ENCODE measurements at regions of chr2 and their contacts with region 1.

Region 1: GRCh38 chr2:197184959-197185586 is 125.5 kb downstream of the ANKRD44 start:
- DNase-seq: peak; percentile 84
- ATAC-seq: peak; percentile 83

Region 2: DNA sequence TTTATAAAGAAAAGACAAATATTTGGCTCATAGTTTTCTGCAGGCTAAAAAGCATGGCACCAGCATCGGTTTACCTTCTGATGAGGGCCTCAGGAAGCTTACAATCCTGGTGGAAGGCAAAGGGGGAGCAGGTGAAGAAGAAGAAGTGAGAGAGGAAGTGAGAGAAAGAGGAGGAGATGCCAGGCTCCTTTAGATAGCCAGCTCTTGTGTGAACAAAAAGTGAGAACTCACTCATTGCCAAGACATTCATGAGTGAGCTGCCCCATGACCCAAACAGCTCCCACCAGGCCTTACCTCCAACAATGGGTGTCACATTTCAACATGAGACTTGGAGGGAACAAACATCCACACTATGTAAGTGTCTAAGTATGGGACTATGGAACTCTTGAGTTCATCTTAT is 531.2 kb before region 1 on chr2:
- intact Hi-C with region 1: loop called (anchors 5 kb)
- DNase-seq: no peak
- ATAC-seq: no peak

Region 3: GRCh38 chr2:196926562-196927375 is 258.3 kb before region 1 on chr2 and contains the start of gene PGAP1:
- intact Hi-C with region 1: loop called (anchors 10 kb)
- DNase-seq: peak; percentile 93
- ATAC-seq: peak; percentile 96
- total RNA-seq, gene PGAP1: 24.7 TPM

Region 4: GRCh38 chr2:197216361-197216979 is 31.4 kb after region 1 on chr2:
- intact Hi-C with region 1: no loop called
- DNase-seq: no peak
- ATAC-seq: peak; percentile 56

Region 5: GRCh38 chr2:197286805-197287598 is 101.9 kb after region 1 on chr2:
- intact Hi-C with region 1: no loop called
- DNase-seq: no peak
- ATAC-seq: peak; percentile 98

Region 6: GRCh38 chr2:197378494-197379307 is 193.6 kb after region 1 on chr2:
- intact Hi-C with region 1: loop called (anchors 10 kb)
- DNase-seq: no peak
- ATAC-seq: peak; percentile 80